ENCODE measurements at regions of chr19 and their contacts with region 1.

Region 1: DNA sequence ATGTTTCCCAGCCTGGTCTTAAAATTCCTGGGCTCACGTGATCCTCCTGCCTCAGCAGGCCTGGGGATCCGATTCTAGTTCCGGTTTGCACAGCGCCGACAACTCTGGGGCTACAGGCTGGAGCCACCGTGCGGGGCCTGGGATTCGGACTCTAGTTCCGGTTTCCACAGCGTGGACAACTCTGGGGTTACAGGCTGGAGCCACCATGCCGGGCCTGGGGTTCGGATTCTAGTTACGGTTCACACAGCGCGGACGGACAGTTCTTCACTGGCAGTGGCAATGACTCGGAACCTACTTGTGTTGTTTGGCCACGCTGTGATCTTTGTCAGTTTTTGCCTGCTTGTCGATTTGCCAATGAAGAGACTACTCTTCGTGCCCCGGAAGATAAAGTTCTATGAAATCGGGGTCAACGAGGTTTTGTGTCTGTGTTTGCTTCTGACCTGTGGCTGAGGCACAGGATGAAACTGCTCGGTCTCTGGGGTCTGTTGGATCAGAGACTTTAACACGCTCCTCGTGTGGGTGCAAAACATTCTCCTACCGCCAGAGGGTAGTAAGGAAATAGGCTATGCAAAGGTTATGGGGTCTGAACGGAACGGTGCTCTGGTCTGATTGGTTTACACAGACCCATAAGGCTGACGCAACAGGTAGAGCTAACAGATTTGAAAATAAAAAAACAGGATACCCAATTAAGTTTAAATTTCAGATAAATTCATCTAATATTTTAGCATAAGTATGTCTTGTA is 12.1 kb upstream of the ZSCAN1 start:
- DNase-seq: no peak
- ATAC-seq: peak; percentile 85
- H3K4me3 ChIP-seq: no peak overlapping the region
- H3K27ac ChIP-seq: no peak overlapping the region
- H3K4me1 ChIP-seq: no peaks in the 10 kb centered on the region
- H3K27me3 ChIP-seq: no peaks in the 10 kb centered on the region
- CTCF ChIP-seq: peak; percentile 63

Region 2: GRCh38 chr19:58154679-58155648 is 133.3 kb after region 1 on chr19:
- intact Hi-C with region 1: loop called (anchors 10 kb)
- DNase-seq: peak; percentile 98
- ATAC-seq: peak; percentile 99
- H3K4me3 ChIP-seq: peak overlapping the region; percentile 99
- H3K27ac ChIP-seq: peak overlapping the region; percentile 95
- H3K4me1 ChIP-seq: peaks cover 8% of the 10 kb centered on the region
- H3K27me3 ChIP-seq: no peaks in the 10 kb centered on the region
- CTCF ChIP-seq: peak; percentile 98

Measured in upper lobe of right lung (tissue), 1 donor.